Endothelial cell of umbilical vein (primary cell): ENCODE measurements at regions of chr7 and their contacts with region 1.

Region 1: DNA sequence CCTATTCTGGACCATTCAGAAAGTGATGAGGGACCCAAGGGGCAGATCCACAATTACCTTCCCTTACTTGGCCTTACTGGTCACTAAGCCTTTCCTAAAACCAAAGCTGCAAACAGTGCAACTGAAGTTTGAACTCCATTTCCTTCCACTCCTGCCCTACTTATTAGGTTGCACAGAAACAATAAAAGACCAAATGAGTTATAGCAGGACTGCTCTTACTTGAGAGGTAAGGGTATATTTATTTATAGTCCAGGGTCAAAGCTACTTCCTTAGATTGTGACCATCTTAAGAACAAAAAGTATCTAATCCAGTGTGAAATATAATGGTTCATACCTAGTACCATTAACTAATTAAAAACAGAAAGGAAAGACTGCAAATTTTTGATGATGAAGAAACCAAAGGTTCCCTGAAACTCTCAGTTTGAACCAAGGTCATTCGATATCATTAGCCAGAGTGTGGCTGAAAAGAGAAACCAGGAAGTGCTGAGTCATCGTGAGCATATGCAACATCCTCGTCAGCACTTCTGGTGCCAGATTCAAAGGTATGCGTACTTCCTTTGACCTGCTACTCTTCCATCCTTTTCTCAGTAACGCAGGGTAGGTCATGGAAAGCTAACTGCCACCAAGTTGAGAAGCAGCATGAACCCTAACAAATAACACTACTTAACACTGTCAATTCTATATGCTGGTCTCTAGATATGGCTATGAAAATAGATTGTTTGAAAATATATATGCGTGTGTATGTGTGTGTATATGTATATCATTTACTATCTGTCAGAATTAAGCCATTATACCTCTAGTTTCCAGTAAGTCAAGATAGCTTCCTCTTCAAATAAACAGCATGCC is 26.8 kb downstream of the CDK6 start:
- DNase-seq: peak; percentile 90
- H3K4me3 ChIP-seq: peak overlapping the region in 1 of 3 experiments; percentile 32
- H3K27ac ChIP-seq: peak overlapping the region; percentile 86
- H3K4me1 ChIP-seq: peaks cover 29% of the 10 kb centered on the region
- H3K27me3 ChIP-seq: no peaks in the 10 kb centered on the region
- CTCF ChIP-seq: no peak
- POLR2A ChIP-seq: no peak

Region 2: DNA sequence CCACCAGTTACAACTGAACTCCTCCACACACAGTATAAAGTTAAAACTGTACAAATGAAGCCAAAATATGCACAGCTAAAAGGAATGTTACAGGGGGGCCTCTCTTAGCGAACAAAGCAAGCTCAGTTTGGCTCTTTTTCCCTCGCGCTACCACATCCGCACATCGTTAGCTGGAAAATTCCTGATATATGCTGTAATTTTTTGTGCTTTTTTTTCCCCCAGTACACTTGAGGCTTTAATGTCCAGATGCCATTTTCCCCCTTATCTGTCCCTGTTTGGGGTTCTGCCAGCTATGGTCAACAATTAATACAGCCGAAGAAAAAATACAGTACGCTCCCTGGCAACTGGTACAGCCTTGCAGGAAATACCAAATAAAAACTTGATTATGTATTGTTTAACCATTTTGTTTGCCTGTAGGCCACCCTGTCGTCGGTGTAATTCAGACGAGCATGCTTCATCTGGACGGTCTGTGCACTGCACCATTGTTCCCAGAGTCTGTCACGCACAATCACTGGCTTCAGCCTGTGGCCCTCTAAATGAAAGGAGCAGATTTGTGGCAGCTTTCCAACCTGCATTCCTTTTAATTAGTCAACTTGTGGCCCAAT is 111.3 kb before region 1 on chr7:
- CTCF ChIA-PET with region 1: interaction called, 5 read pairs
- POLR2A ChIA-PET with region 1: no interaction called
- dilution Hi-C with region 1: no loop called
- intact Hi-C with region 1: loop called (anchors 1 kb)
- DNase-seq: peak; percentile 95
- H3K4me3 ChIP-seq: peak overlapping the region in 1 of 3 experiments; percentile 1
- H3K27ac ChIP-seq: peak overlapping the region; percentile 75
- H3K4me1 ChIP-seq: peaks cover 44% of the 10 kb centered on the region
- H3K27me3 ChIP-seq: no peaks in the 10 kb centered on the region
- CTCF ChIP-seq: no peak
- POLR2A ChIP-seq: peak; percentile 35

Region 3: GRCh38 chr7:92717993-92718716 is 91.5 kb before region 1 on chr7:
- CTCF ChIA-PET with region 1: interaction called, 3 read pairs
- POLR2A ChIA-PET with region 1: no interaction called
- dilution Hi-C with region 1: no loop called
- intact Hi-C with region 1: loop called (anchors 1 kb)
- DNase-seq: peak; percentile 97
- H3K4me3 ChIP-seq: peak overlapping the region; percentile 28 to 72 (median 36)
- H3K27ac ChIP-seq: peak overlapping the region; percentile 95
- H3K4me1 ChIP-seq: peaks cover 28% of the 10 kb centered on the region
- H3K27me3 ChIP-seq: no peaks in the 10 kb centered on the region
- CTCF ChIP-seq: no peak
- POLR2A ChIP-seq: peak; percentile 59

Region 4: DNA sequence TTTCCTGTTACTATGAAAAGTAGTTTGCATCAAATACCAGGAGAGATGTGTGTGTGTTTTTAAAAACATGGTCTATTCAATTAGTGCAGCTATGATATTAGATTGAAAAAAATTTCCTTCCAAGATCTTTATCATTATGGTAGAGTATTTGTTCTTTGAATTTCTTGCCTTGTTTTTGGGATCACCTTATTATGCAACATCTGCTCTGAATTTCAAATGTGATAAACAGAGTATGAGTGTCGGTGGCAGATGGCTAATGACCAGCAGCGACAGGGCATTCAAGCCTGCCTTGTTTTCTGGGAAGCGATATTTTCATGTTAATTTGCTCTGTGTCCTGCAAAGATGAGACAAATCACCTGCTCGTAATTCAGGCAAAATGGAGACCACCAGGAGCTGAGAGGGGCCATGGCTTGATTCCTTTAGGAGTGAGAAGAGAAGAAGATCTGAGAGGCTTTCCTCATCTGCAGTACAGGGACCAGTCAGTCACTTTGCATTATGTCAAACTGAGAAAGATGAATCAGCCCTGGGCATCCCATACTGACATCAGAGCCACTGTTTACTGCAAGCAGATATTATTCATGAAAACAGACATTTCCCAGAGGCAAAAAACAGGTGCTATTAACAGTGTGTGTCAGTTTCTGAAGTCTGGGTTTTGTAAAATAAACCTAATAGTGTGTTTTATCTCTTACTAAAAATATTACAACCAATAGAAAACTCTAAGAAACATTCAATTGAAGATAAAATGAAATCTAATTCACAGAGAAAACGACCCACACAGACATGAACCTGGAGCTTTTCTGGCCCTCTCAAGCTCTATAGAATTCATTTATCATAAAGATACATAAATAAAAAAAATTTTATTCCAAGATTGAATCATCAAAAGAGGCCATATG is 40.9 kb before region 1 on chr7:
- CTCF ChIA-PET with region 1: interaction called, 10 read pairs
- POLR2A ChIA-PET with region 1: no interaction called
- dilution Hi-C with region 1: no loop called
- intact Hi-C with region 1: no loop called
- DNase-seq: no peak
- H3K4me3 ChIP-seq: no peak overlapping the region
- H3K27ac ChIP-seq: no peak overlapping the region
- H3K4me1 ChIP-seq: peaks cover 14% of the 10 kb centered on the region
- H3K27me3 ChIP-seq: no peaks in the 10 kb centered on the region
- CTCF ChIP-seq: no peak
- POLR2A ChIP-seq: no peak

Region 5: GRCh38 chr7:92953657-92954056 is 144.0 kb after region 1 on chr7:
- CTCF ChIA-PET with region 1: no interaction called
- POLR2A ChIA-PET with region 1: no interaction called
- dilution Hi-C with region 1: no loop called
- intact Hi-C with region 1: no loop called
- DNase-seq: no peak
- H3K4me3 ChIP-seq: no peak overlapping the region
- H3K27ac ChIP-seq: no peak overlapping the region
- H3K4me1 ChIP-seq: no peaks in the 10 kb centered on the region
- H3K27me3 ChIP-seq: no peaks in the 10 kb centered on the region
- CTCF ChIP-seq: no peak
- POLR2A ChIP-seq: no peak